ENCODE measurements at regions of chr10 and their contacts with region 1.

Region 1: DNA sequence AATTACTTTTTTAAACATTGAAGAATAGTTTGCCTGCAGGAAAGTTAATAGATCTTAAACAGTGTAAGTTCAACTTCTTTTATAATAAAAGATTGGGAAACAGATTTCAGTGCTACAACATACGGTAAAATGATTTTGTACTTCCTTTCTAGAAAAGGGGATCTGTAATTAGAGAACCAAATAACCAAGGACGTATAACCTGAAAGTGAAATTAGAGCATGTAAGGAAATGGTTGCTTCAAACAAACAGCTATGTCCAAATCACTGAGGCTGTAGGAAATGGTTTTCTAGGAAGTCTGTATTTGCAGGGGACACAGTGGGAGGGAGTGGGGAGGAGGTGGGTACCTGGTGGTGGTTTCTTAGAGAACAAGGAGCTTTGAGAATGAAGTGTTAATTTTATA is 57.9 kb upstream of the EXOC6 start:
- DNase-seq: no peak
- ATAC-seq: peak; percentile 47
- H3K4me3 Mint-ChIP-seq: peak overlapping the region; percentile 63
- H3K27ac Mint-ChIP-seq: peak overlapping the region; percentile 92
- H3K4me1 Mint-ChIP-seq: peaks cover 45% of the 10 kb centered on the region
- H3K27me3 Mint-ChIP-seq: no peaks in the 10 kb centered on the region
- CTCF ChIP-seq: no peak

Region 2: GRCh38 chr10:92773776-92774175 is 16.7 kb before region 1 on chr10:
- CTCF ChIA-PET with region 1: no interaction called
- POLR2A ChIA-PET with region 1: no interaction called
- intact Hi-C with region 1: loop called (anchors 2 kb)
- DNase-seq: no peak
- ATAC-seq: no peak
- H3K4me3 Mint-ChIP-seq: no peak overlapping the region
- H3K27ac Mint-ChIP-seq: peak overlapping the region; percentile 4
- H3K4me1 Mint-ChIP-seq: peaks cover 6% of the 10 kb centered on the region
- H3K27me3 Mint-ChIP-seq: no peaks in the 10 kb centered on the region
- CTCF ChIP-seq: no peak

Region 3: DNA sequence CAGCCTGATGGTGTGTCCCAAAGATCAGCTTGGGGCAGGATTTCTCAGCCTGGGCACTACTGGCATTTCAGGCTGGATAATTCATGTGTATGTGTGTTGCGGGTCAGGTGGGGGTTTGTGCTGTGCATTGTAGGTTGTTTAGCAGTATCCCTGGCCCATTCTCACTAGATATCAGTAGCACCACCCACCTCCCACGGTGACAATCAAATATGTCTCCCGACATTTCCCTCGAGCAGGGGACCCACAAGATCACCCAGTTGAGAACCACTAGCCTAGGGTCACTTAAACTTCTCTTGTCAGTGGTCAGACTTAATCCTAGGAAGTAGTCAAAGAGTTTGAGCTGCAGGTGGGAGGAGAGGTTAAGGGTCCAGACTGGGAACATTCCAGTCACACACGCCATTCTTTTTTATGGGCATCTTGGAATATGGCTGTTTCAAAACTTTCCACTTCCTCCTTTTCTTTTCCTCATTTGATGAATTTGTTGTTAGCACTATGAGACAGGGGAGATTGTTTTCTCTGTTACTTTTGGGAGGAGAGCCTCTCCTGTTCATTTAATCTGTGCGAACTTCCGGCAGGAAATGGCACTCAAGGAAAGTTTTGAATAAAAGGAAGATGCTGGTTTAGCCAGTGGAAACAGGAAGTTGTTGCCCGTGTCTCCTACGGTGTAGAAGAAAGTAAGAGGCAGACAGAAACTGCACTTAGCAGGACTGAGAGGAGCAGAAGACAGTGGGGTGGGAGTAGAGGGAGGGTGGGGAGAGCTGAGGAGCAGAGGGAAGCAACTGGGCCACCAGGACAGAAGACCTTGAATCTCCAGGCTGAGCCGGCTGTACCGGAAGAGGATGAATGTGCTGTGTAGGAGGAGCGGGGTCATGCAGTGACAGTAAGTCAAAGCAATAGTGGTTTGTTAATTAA is 40.3 kb after region 1 on chr10:
- CTCF ChIA-PET with region 1: no interaction called
- POLR2A ChIA-PET with region 1: no interaction called
- intact Hi-C with region 1: loop called (anchors 5 kb)
- DNase-seq: no peak
- ATAC-seq: peak; percentile 88
- H3K4me3 Mint-ChIP-seq: peak overlapping the region; percentile 87
- H3K27ac Mint-ChIP-seq: peak overlapping the region; percentile 88
- H3K4me1 Mint-ChIP-seq: peaks cover 33% of the 10 kb centered on the region
- H3K27me3 Mint-ChIP-seq: no peaks in the 10 kb centered on the region
- CTCF ChIP-seq: no peak